Activated CD8-positive, alpha-beta memory T cell treated with anti-CD3 and anti-CD28 coated beads, Interleukin-2, amount 10 ng/mL, durations not matched to agents 7 days and 5 days (primary cell): ENCODE measurements at regions of chr2 and their contacts with region 1.

Region 1: GRCh38 chr2:118221666-118222594 is 133.7 kb downstream of the INSIG2 start:
- DNase-seq: peak; percentile 48
- ATAC-seq: peak; percentile 75
- H3K4me3 Mint-ChIP-seq: no peak overlapping the region
- H3K27ac Mint-ChIP-seq: no peak overlapping the region
- H3K4me1 Mint-ChIP-seq: peaks cover 17% of the 10 kb centered on the region
- H3K27me3 Mint-ChIP-seq: peaks cover 71% of the 10 kb centered on the region

Region 2: GRCh38 chr2:118186110-118186857 is 35.6 kb before region 1 on chr2:
- CTCF ChIA-PET with region 1: interaction called, 16 read pairs
- DNase-seq: peak; percentile 93
- ATAC-seq: peak; percentile 97
- H3K4me3 Mint-ChIP-seq: peak overlapping the region; percentile 88
- H3K27ac Mint-ChIP-seq: peak overlapping the region; percentile 96
- H3K4me1 Mint-ChIP-seq: peaks cover 19% of the 10 kb centered on the region
- H3K27me3 Mint-ChIP-seq: no peaks in the 10 kb centered on the region

Region 3: GRCh38 chr2:118855451-118856279 is 633.7 kb after region 1 on chr2:
- CTCF ChIA-PET with region 1: interaction called, 39 read pairs
- DNase-seq: peak; percentile 79
- ATAC-seq: peak; percentile 84
- H3K4me3 Mint-ChIP-seq: no peak overlapping the region
- H3K27ac Mint-ChIP-seq: no peak overlapping the region
- H3K4me1 Mint-ChIP-seq: peaks cover 12% of the 10 kb centered on the region
- H3K27me3 Mint-ChIP-seq: peaks cover 95% of the 10 kb centered on the region